GM13976 (cell line): ENCODE measurements at regions of chr6 and their contacts with region 1.

Region 1: DNA sequence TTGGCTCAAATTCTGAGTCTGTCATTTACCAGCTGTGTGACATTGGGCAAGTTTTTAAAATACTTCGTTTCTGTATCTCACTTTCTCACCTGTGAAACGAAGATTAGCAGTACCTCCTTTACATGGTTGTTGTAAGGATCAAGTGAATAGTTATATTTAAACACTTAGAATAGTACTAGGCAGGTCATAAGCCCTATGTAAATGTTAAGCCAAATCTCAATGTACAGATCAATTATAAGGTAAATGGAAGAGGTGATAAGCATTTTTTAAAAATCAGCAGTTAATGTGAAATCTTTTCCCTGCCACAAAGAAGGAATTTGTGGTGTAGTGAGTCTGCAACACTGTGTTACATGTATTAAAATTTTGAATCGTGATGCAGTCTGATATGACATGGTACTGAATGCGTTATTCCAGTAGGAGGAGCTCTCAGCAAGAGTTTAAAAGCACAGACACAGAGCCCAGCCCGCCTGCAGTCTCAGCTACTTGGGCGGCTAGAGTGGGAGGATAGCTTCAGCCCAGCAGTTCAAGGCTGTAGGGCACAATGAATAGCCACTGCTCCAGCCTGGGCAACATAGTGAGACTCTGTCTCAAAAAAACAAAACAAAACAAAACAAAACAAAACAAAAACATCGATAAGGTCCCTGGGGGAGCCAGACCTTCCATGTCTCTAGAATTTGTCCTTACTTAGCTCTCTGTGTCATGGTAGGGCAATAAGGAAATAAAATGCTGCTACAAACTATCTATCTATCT is 46.0 kb downstream of the GTF2H5 start:
- DNase-seq: peak; percentile 80
- CTCF ChIP-seq: peak; percentile 87

Region 2: DNA sequence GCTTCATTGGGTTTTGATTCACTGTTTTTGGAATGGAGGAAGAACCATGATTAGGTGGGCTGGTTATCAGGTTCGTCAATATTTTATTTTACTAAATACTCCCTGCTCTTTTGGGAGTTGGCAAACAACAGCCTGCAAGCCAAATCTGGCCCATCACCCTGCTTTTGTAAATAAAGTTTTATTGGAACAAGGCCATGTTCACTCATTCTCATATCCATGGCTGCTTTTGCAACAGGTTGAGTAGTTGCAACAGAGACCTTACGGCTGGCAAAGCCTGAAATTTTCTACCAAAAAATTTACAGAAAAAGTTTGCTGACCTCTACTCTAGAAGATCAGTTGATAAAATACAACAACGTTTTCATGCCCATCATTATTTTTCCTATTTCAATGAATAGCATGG is 480.8 kb after region 1 on chr6:
- in situ Hi-C with region 1: loop called (anchors 5 kb)
- DNase-seq: no peak
- CTCF ChIP-seq: no peak

Region 3: DNA sequence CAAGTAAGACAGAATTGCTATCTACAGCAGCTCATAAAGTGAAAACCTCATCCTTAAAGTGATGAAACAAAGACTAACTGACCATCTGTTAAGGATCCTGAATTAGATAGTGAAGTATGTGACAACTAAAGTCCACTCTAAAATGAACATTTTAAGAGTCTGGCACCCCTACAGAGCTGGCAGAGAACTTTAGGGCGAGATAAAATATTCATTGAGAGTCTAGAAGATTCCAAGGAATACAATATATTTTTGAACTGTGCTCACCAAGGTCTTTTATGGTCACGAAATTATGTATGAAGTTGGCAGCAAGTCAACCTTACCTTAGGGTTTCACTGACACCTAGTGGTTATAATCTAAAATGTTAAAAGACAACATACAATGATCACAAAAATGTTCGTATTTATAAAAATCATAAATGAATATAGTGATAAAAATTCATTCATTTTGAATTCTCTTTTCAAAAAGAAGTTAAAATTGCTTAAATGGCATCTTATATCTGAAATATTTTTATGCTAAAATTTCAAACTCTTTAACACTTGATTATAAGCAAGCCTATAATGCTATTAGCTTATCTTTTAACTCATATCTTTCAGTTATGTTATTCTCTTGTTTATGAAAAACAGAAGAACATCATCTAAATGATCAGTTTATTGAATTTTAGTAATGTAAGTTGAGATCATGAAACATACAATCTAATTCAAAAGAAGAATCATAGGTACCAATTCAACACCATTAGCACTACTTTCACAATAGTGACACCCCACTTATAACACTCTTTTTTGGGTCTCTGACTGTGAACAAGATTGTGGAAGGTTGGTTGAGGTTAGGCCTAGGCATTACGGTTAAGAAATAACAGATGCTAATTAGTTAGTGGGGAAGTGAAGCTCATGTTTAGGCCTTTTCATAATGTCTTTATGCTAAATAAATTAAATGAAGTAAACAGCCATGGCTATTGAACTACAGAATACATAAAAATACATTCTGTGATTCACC is 758.4 kb after region 1 on chr6:
- in situ Hi-C with region 1: loop called (anchors 25 kb)
- DNase-seq: peak; percentile 53
- CTCF ChIP-seq: peak; percentile 27